ENCODE measurements at regions of chr10 and their contacts with region 1.

Region 1: GRCh38 chr10:71319042-71319799 is at the start of gene SLC29A3:
- DNase-seq: peak; percentile 74 to 87 (median 80)
- H3K4me3 ChIP-seq: peak within 1 kb of the TSS; percentile 61 to 97 (median 81)
- H3K27ac ChIP-seq: peak within 1 kb of the TSS; percentile 50 to 94 (median 86)
- H3K27me3 ChIP-seq: no peaks in the 10 kb centered on the region
- CTCF ChIP-seq: peak; percentile 40 to 77 (median 62)
- total RNA-seq, gene SLC29A3: 5.1 to 15.4 (median 9.2) TPM

Region 2: GRCh38 chr10:71368643-71369042 is 49.4 kb after region 1 on chr10:
- intact Hi-C with region 1: no loop called
- DNase-seq: no peak
- H3K4me3 ChIP-seq: no peak overlapping the region
- H3K27ac ChIP-seq: no peak overlapping the region
- H3K27me3 ChIP-seq: no peaks in the 10 kb centered on the region
- CTCF ChIP-seq: no peak

Region 3: GRCh38 chr10:71462062-71462935 is 143.1 kb after region 1 on chr10:
- intact Hi-C with region 1: no loop called
- DNase-seq: peak in 1 of 10 donors; percentile 70
- H3K4me3 ChIP-seq: no peak overlapping the region
- H3K27ac ChIP-seq: peak overlapping the region in 1 of 59 donors; percentile 76
- H3K27me3 ChIP-seq: peaks cover 0 to 6% (median 0%) of the 10 kb centered on the region in 45 donors
- CTCF ChIP-seq: no peak

Region 4: GRCh38 chr10:71486484-71487114 is 167.4 kb after region 1 on chr10:
- intact Hi-C with region 1: loop called in 1 of 2 experiments (anchors 10 kb)
- DNase-seq: peak in 6 of 10 donors; percentile 31 to 65 (median 52)
- H3K4me3 ChIP-seq: no peak overlapping the region
- H3K27ac ChIP-seq: no peak overlapping the region
- H3K27me3 ChIP-seq: no peaks in the 10 kb centered on the region
- CTCF ChIP-seq: peak in 53 of 56 donors; percentile 14 to 73 (median 56)

Region 5: DNA sequence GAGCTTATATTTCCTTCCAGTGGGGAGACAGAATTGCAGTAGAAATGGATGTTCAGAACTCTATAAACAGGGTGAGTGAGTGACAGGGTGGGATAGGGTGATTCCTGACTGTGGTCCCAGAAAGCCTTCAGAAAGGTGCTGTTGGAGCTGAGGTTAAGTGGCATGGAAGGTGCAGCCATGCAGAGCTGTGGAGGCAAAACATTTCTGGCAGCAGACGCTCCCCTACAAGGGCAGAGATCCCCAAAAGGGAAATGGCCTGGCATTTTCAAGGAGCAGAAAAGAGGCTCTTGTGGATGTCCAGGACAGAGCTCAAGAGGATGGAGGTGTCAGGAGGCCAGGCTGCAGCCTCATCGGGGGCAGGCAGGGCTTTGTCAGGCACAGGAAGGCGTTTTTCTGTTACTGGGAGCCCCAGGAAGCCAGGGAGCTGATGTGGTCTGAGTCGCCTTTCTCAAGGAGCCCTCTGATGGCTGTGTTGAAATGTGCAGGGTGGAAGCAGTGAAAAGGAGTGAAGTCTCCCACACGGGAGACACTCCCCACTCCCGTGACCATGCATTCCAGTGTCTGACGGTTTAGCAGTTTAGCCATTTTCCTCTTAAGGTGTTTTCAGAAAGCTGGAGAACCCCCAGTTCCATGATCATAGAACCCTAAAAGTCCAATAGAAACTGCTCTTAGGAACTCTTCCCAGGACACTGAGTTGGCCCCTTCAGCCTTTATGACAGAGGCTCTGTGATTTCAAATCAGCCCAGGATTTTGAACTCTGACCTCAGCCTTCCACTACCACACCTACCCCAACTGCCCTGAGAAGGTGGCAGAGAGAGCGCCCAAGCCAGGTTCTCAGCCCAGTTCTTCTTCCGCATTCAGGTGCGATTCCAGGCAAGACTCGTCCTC is 304.1 kb after region 1 on chr10:
- intact Hi-C with region 1: loop called in 1 of 2 experiments (anchors 5 kb)
- DNase-seq: peak in 6 of 10 donors; percentile 37 to 55 (median 47)
- H3K4me3 ChIP-seq: no peak overlapping the region
- H3K27ac ChIP-seq: peak overlapping the region in 37 of 59 donors; percentile 3 to 87 (median 50)
- H3K27me3 ChIP-seq: no peaks in the 10 kb centered on the region
- CTCF ChIP-seq: peak in 42 of 56 donors; percentile 11 to 49 (median 34)

Region 6: DNA sequence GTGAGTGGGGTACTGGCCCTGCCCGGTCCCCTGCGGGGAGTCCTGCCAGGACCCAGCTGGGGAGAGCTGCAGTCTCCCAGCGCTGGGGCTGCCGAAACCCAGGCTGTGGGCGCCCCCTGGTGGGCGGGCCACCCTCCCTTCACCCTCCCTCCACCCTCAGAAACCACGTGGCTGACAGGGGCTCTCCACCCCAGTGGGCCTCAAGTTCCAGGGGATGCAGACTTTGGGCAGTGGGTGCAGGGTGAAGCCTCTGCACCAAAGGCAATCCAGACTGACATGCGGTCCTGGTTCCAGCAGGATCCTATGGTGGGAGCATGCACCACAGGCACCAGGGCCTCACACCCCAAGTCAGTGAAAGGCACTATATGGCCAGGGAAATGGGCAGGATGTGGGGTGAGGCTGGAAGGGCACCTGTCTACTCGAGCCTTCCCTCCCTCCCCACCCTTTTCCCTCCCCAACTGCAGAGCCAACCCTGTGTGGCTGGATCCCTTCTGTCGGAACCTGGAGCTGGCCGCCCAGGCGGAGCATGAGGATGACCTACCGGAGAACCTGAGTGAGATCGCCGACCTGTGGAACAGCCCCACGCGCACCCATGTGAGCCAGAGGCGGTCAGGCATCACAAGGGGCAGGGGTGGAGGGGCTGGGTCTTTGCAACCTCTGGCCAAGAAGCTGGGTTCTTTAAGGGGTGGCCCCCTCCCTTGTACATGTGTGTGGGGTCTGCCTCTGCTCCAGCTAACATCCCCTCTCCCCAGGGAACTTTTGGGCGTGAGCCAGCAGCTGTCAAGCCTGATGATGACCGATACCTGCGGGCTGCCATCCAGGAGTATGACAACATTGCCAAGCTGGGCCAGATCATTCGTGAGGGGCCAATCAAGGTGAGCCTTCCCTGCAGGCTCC is 493.0 kb after region 1 on chr10:
- intact Hi-C with region 1: loop called (anchors 5 to 10 kb)
- DNase-seq: peak in 9 of 10 donors; percentile 56 to 83 (median 72)
- H3K4me3 ChIP-seq: no peak overlapping the region
- H3K27ac ChIP-seq: peak overlapping the region in 29 of 59 donors; percentile 6 to 87 (median 45)
- H3K27me3 ChIP-seq: no peaks in the 10 kb centered on the region
- CTCF ChIP-seq: peak; percentile 48 to 91 (median 80)

Region 7: DNA sequence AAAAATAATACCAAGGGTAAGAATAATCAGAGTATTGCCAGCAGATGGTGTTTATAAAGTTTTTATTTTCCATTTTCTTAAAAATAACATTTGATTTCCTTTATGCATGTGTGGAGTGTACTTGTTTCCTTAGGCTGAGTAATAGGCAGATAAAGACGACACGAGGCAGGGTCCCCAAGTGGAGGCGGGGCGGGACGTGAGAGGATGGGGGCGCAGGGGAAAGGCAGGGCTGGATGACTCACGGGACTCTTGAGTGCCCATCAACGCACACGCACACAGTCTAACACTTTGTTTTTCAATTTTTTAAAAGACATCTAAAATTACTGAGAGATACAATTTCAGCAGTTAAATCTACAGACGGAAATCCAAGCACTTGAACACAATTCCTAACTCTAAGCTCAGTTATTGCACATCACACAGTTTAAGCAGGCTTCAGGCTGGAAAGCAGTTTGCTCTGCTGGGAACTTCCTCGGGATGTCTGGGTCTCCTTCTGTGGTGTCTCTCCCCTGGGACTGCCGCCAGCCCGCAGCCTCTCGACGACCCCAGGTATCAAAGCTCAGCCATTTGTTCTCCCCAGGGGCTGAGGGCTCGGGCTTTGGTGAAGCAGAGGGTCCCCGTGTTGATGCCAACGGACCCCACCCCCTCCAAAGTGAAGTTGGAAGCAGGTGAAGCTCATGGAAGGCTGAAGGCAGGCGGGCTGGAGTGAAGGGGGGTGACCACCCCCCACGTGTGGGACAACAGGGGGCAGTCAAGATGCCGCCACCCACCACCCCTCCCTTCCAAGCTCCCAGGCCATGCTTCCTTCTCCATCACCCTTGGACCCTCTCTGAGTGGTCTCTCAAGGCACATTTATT is 740.0 kb after region 1 on chr10:
- intact Hi-C with region 1: loop called in 1 of 2 experiments (anchors 10 kb)
- DNase-seq: peak in 1 of 10 donors; percentile 49
- H3K4me3 ChIP-seq: no peak overlapping the region
- H3K27ac ChIP-seq: peak overlapping the region in 3 of 59 donors; percentile 12 to 44 (median 27)
- H3K27me3 ChIP-seq: no peaks in the 10 kb centered on the region
- CTCF ChIP-seq: no peak

Measured in dorsolateral prefrontal cortex (tissue), 120 donors.